ENCODE measurements at regions of chr1 and their contacts with region 1.

Region 1: GRCh38 chr1:203649999-203650855 is 23.6 kb downstream of the ATP2B4 start:
- DNase-seq: peak; percentile 86
- H3K4me3 Mint-ChIP-seq: peak overlapping the region; percentile 77
- H3K27ac Mint-ChIP-seq: peak overlapping the region; percentile 95
- H3K4me1 Mint-ChIP-seq: peaks cover 58% of the 10 kb centered on the region
- H3K27me3 Mint-ChIP-seq: no peaks in the 10 kb centered on the region

Region 2: GRCh38 chr1:203287109-203287893 is 362.9 kb before region 1 on chr1:
- intact Hi-C with region 1: loop called (anchors 2 kb)
- DNase-seq: peak; percentile 95
- H3K4me3 Mint-ChIP-seq: peak overlapping the region; percentile 82
- H3K27ac Mint-ChIP-seq: peak overlapping the region; percentile 97
- H3K4me1 Mint-ChIP-seq: peaks cover 69% of the 10 kb centered on the region
- H3K27me3 Mint-ChIP-seq: peaks cover 2% of the 10 kb centered on the region

Region 3: DNA sequence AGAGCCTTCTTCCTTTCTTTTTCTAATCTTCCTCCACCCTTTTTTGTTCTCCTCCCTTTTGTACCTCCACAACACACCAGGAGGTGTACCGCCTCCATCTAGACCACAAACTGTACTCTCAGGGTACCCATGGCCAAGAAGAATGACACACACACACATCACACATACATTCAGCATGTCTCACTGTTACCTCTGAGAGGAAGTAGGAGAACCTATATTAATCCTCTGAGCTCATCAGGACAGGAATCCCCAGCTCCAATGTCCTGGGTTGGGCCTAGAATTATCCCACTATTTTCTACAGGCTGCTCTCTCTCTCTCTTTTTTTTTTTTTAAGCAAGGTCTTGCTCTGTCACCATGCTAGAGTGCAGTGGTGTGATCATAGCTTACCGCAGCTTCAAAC is 13.1 kb after region 1 on chr1:
- intact Hi-C with region 1: loop called (anchors 1 kb)
- DNase-seq: peak; percentile 68
- H3K4me3 Mint-ChIP-seq: peak overlapping the region; percentile 29
- H3K27ac Mint-ChIP-seq: peak overlapping the region; percentile 69
- H3K4me1 Mint-ChIP-seq: peaks cover 54% of the 10 kb centered on the region
- H3K27me3 Mint-ChIP-seq: no peaks in the 10 kb centered on the region

Region 4: DNA sequence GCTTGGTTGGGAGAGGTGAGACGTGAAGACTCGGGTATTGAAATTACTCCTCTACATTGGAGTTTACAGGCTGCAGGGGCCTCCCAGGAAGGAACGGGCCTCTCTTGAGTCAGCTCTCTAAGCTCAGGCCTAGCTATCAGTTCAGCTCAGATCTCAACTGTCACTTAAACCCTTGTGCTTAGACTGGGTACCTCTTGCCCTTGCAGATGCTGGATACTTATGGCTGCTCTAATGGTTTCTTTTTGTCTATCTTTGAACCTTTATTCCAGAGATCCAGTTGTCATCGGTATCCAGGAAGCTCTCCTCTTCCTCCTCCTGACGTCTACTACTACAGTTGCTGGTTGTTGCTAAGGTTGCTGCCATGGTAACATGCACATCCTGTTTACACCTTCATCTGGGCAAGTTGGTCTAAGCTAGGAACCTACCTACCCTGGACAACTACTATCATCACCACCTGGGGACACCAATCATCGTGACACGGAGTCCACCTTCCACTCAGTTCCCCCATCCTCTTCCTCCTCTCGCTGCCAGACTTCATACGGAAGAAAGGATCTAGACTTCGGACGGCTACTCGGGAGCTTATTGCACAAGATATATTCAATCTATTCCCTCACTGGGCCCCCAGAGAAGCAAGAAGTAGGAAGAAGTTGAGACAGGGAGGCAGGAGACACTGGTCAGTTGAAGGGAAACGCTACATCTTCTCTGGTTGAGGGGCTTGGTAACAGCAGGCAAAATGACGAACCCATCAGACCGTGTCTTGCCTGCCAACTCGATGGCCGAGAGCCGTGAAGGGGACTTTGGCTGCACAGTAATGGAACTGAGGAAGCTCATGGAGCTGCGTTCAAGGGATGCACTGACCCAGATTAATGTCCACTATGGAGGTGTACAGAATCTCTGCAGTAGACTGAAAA is 32.5 kb after region 1 on chr1:
- intact Hi-C with region 1: loop called (anchors 1 kb)
- DNase-seq: peak; percentile 94
- H3K4me3 Mint-ChIP-seq: peak overlapping the region; percentile 70
- H3K27ac Mint-ChIP-seq: peak overlapping the region; percentile 92
- H3K4me1 Mint-ChIP-seq: peaks cover 31% of the 10 kb centered on the region
- H3K27me3 Mint-ChIP-seq: no peaks in the 10 kb centered on the region

Region 5: DNA sequence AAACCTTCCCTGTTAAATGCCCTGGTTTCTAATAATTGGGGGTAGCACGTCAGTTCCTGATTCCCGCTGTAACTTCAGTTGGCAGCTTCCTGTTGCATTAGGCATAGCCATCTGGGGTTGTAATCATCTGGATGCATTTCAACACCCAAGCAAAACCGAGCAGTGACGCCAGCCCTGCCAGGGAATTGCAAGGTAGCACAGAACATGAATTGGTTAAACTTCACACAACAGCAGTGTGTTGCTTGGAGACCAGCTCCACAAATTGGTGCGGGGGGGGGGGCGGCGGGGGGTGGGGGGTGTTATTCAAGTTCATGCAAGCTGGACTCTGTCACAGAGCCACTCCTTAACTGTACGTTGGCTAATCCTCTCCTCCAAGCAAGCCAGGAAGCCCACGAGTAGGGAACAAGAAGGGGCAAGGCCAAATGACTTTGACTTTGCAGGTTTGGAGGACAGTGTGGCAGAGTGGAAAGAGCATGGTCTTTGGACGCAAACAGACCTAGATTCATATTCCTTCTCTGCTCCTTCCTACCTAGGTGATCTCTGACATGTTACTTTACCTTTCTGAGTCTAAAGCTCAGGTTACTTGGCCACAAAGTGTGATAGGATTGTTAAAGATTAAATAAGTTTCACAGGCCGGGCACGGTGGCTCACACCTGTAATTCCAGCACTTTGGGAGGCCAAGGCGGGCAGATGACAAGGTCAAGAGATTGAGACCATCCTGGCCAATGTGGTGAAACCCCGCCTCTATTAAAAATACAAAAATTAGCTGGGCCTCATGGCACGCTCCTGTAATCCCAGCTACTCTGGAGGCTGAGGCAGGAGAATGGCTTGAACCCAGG is 119.5 kb after region 1 on chr1:
- intact Hi-C with region 1: loop called (anchors 2 kb)
- DNase-seq: no peak
- H3K4me3 Mint-ChIP-seq: no peak overlapping the region
- H3K27ac Mint-ChIP-seq: peak overlapping the region; percentile 51
- H3K4me1 Mint-ChIP-seq: peaks cover 27% of the 10 kb centered on the region
- H3K27me3 Mint-ChIP-seq: no peaks in the 10 kb centered on the region